Activated CD4-positive, alpha-beta T cell treated with anti-CD3 and anti-CD28 coated beads for 36 hours (primary cell): ENCODE measurements at regions of chr20 and their contacts with region 1.

Region 1: GRCh38 chr20:13212750-13213149 is 8.3 kb upstream of the ISM1 start:
- DNase-seq: peak; percentile 39
- ATAC-seq: peak; percentile 91
- H3K4me3 Mint-ChIP-seq: no peak overlapping the region
- H3K27ac Mint-ChIP-seq: no peak overlapping the region
- H3K4me1 Mint-ChIP-seq: peaks cover 4% of the 10 kb centered on the region
- H3K27me3 Mint-ChIP-seq: peaks cover 37% of the 10 kb centered on the region

Region 2: GRCh38 chr20:12869669-12870068 is 343.1 kb before region 1 on chr20:
- CTCF ChIA-PET with region 1: no interaction called
- POLR2A ChIA-PET with region 1: no interaction called
- intact Hi-C with region 1: no loop called
- DNase-seq: no peak
- ATAC-seq: no peak
- H3K4me3 Mint-ChIP-seq: no peak overlapping the region
- H3K27ac Mint-ChIP-seq: no peak overlapping the region
- H3K4me1 Mint-ChIP-seq: no peaks in the 10 kb centered on the region
- H3K27me3 Mint-ChIP-seq: no peaks in the 10 kb centered on the region

Region 3: GRCh38 chr20:13158369-13158768 is 54.4 kb before region 1 on chr20:
- CTCF ChIA-PET with region 1: no interaction called
- POLR2A ChIA-PET with region 1: no interaction called
- intact Hi-C with region 1: loop called in 1 of 2 experiments (anchors 10 kb)
- DNase-seq: no peak
- ATAC-seq: no peak
- H3K4me3 Mint-ChIP-seq: no peak overlapping the region
- H3K27ac Mint-ChIP-seq: no peak overlapping the region
- H3K4me1 Mint-ChIP-seq: no peaks in the 10 kb centered on the region
- H3K27me3 Mint-ChIP-seq: no peaks in the 10 kb centered on the region